ENCODE measurements at regions of chr10 and their contacts with region 1.

Region 1: GRCh38 chr10:17200912-17201793 is at the start of gene TRDMT1:
- DNase-seq: peak; percentile 77
- H3K4me3 ChIP-seq: peak within 1 kb of the TSS; percentile 66 to 70
- H3K27ac ChIP-seq: peak within 1 kb of the TSS; percentile 88 to 89
- H3K4me1 ChIP-seq: no peaks in the 10 kb centered on the region
- H3K27me3 ChIP-seq: no peaks in the 10 kb centered on the region
- CTCF ChIP-seq: peak; percentile 2 to 32 (median 20)
- POLR2A ChIP-seq: no peak
- total RNA-seq, gene TRDMT1: 6.5 to 9.9 TPM

Region 2: DNA sequence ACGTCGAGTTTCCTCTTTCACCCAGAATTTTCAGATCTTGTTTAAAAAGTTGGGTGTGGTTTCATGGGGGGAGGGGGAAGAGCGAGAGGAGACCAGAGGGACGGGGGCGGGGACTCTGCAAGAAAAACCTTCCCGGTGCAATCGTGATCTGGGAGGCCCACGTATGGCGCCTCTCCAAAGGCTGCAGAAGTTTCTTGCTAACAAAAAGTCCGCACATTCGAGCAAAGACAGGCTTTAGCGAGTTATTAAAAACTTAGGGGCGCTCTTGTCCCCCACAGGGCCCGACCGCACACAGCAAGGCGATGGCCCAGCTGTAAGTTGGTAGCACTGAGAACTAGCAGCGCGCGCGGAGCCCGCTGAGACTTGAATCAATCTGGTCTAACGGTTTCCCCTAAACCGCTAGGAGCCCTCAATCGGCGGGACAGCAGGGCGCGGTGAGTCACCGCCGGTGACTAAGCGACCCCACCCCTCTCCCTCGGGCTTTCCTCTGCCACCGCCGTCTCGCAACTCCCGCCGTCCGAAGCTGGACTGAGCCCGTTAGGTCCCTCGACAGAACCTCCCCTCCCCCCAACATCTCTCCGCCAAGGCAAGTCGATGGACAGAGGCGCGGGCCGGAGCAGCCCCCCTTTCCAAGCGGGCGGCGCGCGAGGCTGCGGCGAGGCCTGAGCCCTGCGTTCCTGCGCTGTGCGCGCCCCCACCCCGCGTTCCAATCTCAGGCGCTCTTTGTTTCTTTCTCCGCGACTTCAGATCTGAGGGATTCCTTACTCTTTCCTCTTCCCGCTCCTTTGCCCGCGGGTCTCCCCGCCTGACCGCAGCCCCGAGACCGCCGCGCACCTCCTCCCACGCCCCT is 27.2 kb after region 1 on chr10 and contains the start of gene VIM:
- intact Hi-C with region 1: loop called (anchors 1 kb)
- DNase-seq: peak; percentile 46
- H3K4me3 ChIP-seq: peak within 1 kb of the TSS; percentile 60
- H3K27ac ChIP-seq: peak within 1 kb of the TSS; percentile 85
- H3K4me1 ChIP-seq: no peaks in the 10 kb centered on the region
- H3K27me3 ChIP-seq: no peaks in the 10 kb centered on the region
- CTCF ChIP-seq: peak in 2 of 4 experiments; percentile 8 to 13
- POLR2A ChIP-seq: no peak
- total RNA-seq, gene VIM: 293 to 1,683 TPM

Region 3: GRCh38 chr10:17712717-17713471 is 511.7 kb after region 1 on chr10:
- intact Hi-C with region 1: no loop called
- DNase-seq: no peak
- H3K4me3 ChIP-seq: no peak overlapping the region
- H3K27ac ChIP-seq: no peak overlapping the region
- H3K4me1 ChIP-seq: peaks cover 12% of the 10 kb centered on the region
- H3K27me3 ChIP-seq: no peaks in the 10 kb centered on the region
- CTCF ChIP-seq: no peak
- POLR2A ChIP-seq: no peak

Measured in prostate gland (tissue), 2 donors.